ENCODE measurements at regions of chr7 and their contacts with region 1.

Region 1: DNA sequence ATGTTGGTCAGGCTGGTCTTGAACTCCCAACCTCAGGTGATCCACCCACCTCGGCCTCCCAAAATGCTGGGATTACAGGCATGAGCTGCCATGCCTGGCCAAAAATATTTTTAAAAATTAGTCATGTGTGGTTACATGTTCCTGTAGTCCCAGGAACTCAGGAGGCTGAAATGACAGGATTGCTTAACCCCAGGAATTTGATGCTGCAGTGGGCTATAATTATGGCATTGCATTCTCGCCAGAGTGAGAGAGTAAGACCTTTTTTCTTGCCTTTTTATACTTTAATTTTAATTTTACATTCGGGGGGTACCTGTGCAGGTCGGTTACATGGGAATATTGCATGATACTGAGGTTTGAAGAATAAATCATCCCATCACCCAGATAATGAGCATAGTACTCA is 86.6 kb upstream of the ZNF92 start:
- DNase-seq: no peak
- ATAC-seq: no peak
- H3K4me3 ChIP-seq: no peak overlapping the region
- H3K27ac ChIP-seq: no peak overlapping the region
- H3K4me1 ChIP-seq: no peaks in the 10 kb centered on the region
- H3K27me3 ChIP-seq: no peaks in the 10 kb centered on the region
- CTCF ChIP-seq: no peak

Region 2: GRCh38 chr7:65269150-65269856 is 17.7 kb before region 1 on chr7:
- intact Hi-C with region 1: loop called in 1 of 2 experiments (anchors 2 kb)
- DNase-seq: no peak
- ATAC-seq: no peak
- H3K4me3 ChIP-seq: peak overlapping the region; percentile 42
- H3K27ac ChIP-seq: no peak overlapping the region
- H3K4me1 ChIP-seq: peaks cover 4% of the 10 kb centered on the region
- H3K27me3 ChIP-seq: peaks cover 0 to 34% (median 9%) of the 10 kb centered on the region in 3 donors
- CTCF ChIP-seq: no peak